ENCODE measurements at regions of chr10 and their contacts with region 1.

Region 1: DNA sequence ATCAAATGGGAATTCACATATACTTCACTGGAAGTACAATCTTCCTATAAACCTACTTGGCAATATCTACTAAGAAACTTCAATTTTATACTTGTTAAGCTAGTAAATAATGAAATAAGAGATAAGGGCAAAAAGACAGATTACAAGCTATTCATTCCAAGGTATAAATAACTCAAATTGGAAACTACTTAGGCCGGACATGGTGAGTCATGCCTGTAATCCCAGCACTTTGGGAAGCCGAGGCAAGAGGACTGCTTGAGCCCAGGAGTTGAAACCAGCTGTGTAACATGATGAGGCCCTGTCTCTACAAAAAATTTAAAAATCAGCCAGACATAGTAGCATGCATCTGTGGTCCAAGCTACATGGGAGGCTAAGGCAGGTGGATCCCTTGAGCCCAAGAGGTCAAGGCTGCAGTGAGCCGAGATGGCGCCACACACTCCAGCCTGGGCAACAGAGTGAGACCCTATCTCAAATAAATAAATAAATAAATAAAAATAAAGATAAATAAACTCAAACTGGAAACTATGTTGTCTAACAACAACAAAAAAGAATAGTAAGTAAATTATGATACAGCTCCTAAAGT is 37.6 kb downstream of the ARHGAP21 start:
- DNase-seq: no peak
- CTCF ChIP-seq: no peak

Region 2: GRCh38 chr10:24483489-24484100 is 202.5 kb before region 1 on chr10:
- CTCF ChIA-PET with region 1: no interaction called
- POLR2A ChIA-PET with region 1: no interaction called
- DNase-seq: no peak
- CTCF ChIP-seq: no peak

Region 3: DNA sequence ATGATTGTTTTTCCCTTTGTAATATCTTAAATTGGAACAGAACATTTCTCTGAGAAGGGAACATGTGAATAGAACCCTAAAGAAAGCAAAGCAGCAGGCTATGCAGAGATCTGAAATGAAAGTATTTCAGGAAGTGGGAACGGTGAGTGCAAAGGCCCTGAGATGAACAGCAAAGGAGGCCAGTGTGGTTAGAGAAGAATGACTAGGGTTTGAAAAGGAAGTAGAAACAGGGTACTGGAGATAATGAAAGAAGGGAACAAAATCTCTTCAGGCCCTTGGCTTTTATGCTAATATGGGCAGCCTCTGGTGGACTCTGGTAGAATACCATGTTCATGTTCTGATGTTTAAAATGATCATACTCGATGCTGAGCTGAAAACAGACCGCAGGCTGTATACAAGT is 15.4 kb after region 1 on chr10:
- CTCF ChIA-PET with region 1: interaction called, 48 read pairs
- POLR2A ChIA-PET with region 1: no interaction called
- DNase-seq: peak; percentile 38
- CTCF ChIP-seq: no peak

Region 4: GRCh38 chr10:24706479-24707118 is 20.6 kb after region 1 on chr10:
- CTCF ChIA-PET with region 1: interaction called, 48 read pairs
- POLR2A ChIA-PET with region 1: no interaction called
- DNase-seq: no peak
- CTCF ChIP-seq: no peak

Region 5: DNA sequence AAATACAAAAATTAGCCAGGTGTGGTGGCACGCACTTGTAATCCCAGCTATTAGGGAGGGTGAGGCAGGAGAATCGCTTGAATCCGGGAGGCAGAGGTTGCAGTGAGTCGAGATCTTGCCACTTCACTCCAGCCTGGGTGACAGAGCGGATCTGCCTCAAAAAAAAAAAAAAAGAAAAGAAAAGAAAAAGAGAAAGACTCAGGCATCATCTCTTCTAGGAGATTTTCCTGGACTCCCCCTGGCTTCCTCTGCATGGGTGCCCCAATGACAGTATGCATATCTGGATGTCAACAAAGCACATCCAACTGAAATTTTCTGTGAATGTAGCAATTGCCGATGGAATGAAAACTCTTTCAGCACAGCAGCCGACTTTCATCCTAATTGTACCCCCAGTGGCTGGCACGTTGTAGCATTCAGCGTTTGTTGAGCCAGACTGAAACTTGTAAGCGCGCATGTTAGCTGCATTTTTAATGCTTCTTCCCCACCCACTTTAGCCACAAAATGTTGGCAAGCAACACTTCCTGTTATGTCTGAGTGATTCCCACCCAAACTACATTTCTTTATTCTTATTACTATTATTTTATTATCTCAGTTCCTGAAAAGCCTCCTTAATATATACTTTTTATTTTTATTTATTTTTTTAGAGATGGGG is 196.1 kb after region 1 on chr10:
- CTCF ChIA-PET with region 1: no interaction called
- POLR2A ChIA-PET with region 1: no interaction called
- DNase-seq: no peak
- CTCF ChIP-seq: no peak

Region 6: GRCh38 chr10:24920907-24921881 is 235.1 kb after region 1 on chr10:
- CTCF ChIA-PET with region 1: no interaction called
- POLR2A ChIA-PET with region 1: no interaction called
- DNase-seq: peak; percentile 33
- CTCF ChIP-seq: no peak

Measured in GM10248 (cell line).